ENCODE measurements at regions of chr5 and their contacts with region 1.

Region 1: DNA sequence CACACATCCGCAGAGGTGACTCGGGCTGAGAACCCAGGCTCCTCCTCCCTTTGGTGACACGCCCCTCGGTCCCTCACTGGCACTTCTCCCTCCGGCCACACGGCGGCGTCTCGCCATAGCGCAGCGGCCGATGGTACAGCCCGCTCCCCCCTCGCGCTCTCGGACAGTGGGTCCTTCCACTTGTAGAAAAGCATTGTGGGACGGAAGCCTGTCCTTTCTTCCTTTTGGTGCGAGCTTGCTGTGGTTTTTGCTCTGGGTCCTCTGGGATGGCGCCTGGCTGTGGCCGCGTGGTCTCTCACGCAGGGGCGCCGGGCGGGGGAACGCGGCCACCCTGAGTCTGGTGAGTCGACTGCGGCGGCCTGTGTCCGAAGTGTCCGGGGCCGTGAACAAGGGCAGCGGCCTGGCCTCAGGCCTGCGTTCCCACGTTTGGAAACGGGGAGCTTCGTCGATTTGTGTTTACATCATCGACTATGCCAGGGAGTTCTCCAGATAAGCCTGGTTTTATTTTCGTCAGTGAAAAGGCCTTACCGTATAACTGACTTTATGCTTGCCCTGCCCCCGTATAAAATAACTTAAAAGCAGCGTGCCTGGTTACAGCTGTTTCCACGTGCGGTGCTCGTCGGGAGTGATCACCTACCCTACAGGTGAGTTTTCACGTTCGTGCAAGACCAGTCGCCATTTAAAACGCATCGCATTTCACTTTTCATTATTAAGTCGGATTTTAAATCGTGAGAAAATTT is 258.3 kb downstream of the EPB41L4A start:
- DNase-seq: peak; percentile 94
- H3K4me3 Mint-ChIP-seq: peak overlapping the region; percentile 91
- H3K27ac Mint-ChIP-seq: peak overlapping the region; percentile 50
- H3K4me1 Mint-ChIP-seq: peaks cover 33% of the 10 kb centered on the region
- H3K27me3 Mint-ChIP-seq: no peaks in the 10 kb centered on the region

Region 2: DNA sequence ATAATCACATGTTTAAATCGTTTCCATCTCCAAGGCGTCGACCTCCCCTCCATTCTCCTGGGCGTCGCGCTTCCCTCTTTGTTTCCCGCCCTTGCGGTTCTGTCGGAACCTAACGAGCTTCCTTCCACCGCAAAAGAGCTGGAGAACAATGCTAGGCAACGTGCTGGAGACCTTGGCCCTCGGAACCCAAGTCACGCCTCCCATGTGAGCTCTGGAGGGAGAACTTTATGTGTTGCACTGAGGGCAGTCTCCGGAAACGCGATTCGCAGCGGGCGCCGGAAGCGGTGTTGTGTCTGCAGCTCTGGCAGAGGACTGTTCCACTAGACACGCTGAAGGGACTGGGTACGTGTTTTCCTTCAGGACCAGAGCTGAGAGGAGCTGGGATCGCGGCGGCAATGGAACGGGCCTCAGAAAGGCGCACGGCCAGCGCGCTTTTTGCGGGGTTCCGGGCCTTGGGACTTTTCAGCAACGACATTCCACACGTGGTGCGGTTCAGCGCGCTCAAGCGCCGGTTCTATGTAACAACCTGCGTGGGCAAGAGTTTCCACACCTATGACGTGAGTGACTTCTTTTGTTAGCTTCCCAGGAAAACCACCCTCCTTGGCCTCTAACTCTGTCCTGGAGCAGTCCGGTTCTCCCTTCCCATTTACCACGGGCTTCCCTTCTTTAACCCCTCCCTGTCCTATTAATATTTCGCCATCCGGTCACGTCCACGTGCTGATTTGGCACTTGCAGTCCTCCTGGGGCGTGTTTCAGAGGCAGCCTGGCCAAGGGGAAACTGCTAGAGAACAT is 1068.6 kb before region 1 on chr5 and contains the start of gene WDR36:
- CTCF ChIA-PET with region 1: no interaction called
- POLR2A ChIA-PET with region 1: interaction called, 5 read pairs
- intact Hi-C with region 1: loop called (anchors 5 kb)
- DNase-seq: peak; percentile 93
- H3K4me3 Mint-ChIP-seq: peak within 1 kb of the TSS; percentile 92
- H3K27ac Mint-ChIP-seq: peak within 1 kb of the TSS; percentile 94
- H3K4me1 Mint-ChIP-seq: peaks cover 38% of the 10 kb centered on the region
- H3K27me3 Mint-ChIP-seq: peaks cover 3% of the 10 kb centered on the region
- total RNA-seq, gene WDR36: 43.5 to 44.1 TPM

Region 3: GRCh38 chr5:111757355-111758283 is 403.2 kb before region 1 on chr5:
- CTCF ChIA-PET with region 1: interaction called, 3 read pairs
- POLR2A ChIA-PET with region 1: no interaction called
- intact Hi-C with region 1: loop called (anchors 2 kb)
- DNase-seq: peak; percentile 82
- H3K4me3 Mint-ChIP-seq: peak overlapping the region; percentile 77
- H3K27ac Mint-ChIP-seq: peak overlapping the region; percentile 60
- H3K4me1 Mint-ChIP-seq: peaks cover 10% of the 10 kb centered on the region
- H3K27me3 Mint-ChIP-seq: peaks cover 26% of the 10 kb centered on the region

Region 4: DNA sequence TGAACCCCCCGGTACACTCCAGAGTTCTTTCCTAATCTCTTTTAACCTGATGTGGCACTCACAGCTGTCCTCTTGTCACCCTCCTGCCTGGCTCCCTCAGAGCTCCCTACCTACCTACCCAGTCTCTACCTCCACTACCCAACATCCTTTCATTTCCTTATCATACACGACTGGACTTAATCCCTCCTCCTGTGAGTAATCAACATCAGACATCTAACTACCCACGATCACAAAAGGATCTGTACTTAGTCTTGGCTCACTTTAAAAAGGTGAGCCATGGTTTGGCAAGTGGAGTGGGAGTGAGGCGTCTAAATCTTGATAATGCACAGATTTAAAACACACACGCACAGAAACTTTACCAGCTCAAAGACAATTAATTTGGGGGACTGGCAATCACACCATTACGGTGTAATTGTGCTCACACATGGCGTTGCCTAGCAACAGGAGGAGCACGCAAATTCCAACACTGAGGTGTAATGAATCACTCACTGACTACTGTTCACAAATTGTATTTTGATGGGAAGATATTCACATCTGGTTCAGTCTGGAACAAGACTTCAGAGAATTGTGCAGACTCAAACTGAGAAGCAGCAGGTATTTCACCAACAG is 22.4 kb after region 1 on chr5:
- CTCF ChIA-PET with region 1: no interaction called
- POLR2A ChIA-PET with region 1: no interaction called
- intact Hi-C with region 1: no loop called
- DNase-seq: no peak
- H3K4me3 Mint-ChIP-seq: no peak overlapping the region
- H3K27ac Mint-ChIP-seq: no peak overlapping the region
- H3K4me1 Mint-ChIP-seq: no peaks in the 10 kb centered on the region
- H3K27me3 Mint-ChIP-seq: peaks cover 23% of the 10 kb centered on the region

Region 5: GRCh38 chr5:112419986-112420864 is 259.4 kb after region 1 on chr5:
- CTCF ChIA-PET with region 1: interaction called, 9 read pairs
- POLR2A ChIA-PET with region 1: interaction called, 5 read pairs
- intact Hi-C with region 1: loop called (anchors 5 kb)
- DNase-seq: peak; percentile 67
- H3K4me3 Mint-ChIP-seq: peak overlapping the region; percentile 61
- H3K27ac Mint-ChIP-seq: no peak overlapping the region
- H3K4me1 Mint-ChIP-seq: peaks cover 10% of the 10 kb centered on the region
- H3K27me3 Mint-ChIP-seq: peaks cover 40% of the 10 kb centered on the region

Region 6: DNA sequence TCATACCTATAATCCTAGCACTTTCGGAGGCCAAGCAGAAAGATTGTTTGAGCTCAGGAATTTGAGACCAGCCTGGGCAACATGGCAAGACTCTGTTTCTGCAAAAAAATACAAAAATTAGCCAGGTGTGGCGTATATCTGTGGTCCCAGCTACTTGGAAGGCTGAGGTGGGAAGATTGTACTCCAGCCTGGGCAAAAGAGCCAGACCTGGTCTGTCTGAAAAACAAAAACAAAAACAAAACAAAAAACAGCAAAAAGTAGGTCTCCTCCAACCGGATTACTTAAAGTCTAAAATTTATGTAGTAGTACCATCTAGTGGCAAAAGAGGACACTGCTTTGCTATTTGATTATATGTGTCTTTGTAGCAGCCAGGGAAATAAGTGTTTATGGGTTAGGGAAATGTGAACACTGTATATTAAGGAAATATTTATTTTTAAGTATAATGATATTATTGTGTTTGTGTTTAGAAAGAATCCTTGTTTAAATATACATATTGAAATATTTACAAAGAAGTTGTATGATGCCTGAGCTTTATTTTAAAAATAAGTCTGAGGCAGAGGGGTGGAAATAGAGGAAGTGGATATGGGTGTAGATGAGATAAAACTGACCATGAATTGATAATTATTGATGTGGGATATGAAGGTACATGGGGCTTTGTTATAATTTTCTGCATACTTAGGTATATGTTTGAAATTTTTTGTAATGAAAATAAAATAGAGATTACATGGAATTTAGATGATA is 596.8 kb after region 1 on chr5:
- CTCF ChIA-PET with region 1: no interaction called
- POLR2A ChIA-PET with region 1: no interaction called
- intact Hi-C with region 1: loop called (anchors 5 kb)
- DNase-seq: no peak
- H3K4me3 Mint-ChIP-seq: no peak overlapping the region
- H3K27ac Mint-ChIP-seq: no peak overlapping the region
- H3K4me1 Mint-ChIP-seq: no peaks in the 10 kb centered on the region
- H3K27me3 Mint-ChIP-seq: no peaks in the 10 kb centered on the region

Region 7: DNA sequence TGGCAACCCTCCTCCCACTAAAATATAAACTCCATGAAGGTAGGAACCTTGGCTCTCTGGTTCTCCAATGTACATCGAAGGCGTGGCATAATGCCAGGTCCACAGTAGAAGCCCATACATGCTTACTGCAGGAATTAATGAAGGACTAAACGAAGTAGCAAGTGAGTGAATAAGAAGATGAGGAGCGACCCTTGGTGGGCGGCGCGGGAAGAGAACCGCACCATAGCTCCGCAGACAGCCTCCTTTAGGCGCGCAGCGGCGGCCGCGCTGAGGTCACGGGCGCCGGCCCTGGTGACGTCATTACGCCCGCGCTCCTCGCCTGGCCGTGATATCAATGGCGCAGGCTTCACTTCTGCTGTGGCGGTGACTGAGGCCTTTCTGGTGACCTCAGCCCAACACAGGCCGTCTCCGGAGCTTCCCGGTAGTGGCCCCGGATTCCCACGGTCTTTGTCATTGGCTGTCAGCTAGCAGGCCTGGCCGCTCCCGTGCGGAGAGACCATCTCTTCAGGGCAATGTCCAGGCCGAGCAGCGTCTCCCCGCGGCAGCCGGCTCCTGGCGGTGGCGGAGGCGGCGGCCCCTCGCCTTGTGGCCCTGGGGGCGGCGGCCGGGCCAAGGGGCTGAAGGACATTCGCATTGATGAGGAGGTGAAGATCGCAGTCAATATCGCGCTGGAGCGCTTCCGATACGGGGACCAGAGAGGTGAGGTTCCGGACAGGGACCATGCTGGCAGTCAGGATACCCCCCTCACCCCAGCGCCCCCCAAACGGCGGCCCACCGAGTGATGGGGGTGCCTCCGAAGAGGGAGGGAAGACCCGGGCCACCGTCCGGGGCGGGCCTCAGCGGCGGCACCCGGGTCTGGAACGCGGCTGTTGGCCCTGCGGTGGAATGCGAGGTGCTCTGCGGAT is 1352.8 kb after region 1 on chr5 and contains the start of gene YTHDC2:
- CTCF ChIA-PET with region 1: no interaction called
- POLR2A ChIA-PET with region 1: no interaction called
- intact Hi-C with region 1: loop called (anchors 10 kb)
- DNase-seq: peak; percentile 93
- H3K4me3 Mint-ChIP-seq: peak within 1 kb of the TSS; percentile 90
- H3K27ac Mint-ChIP-seq: peak within 1 kb of the TSS; percentile 79
- H3K4me1 Mint-ChIP-seq: peaks cover 28% of the 10 kb centered on the region
- H3K27me3 Mint-ChIP-seq: peaks cover 7% of the 10 kb centered on the region
- total RNA-seq, gene YTHDC2: 27.3 to 28.9 TPM

Measured in activated CD4-positive, alpha-beta memory T cell treated with anti-CD3 and anti-CD28 coated beads for 36 hours (primary cell).